Transverse colon (tissue), 4 donors: ENCODE measurements at regions of chr2 and their contacts with region 1.

Region 1: DNA sequence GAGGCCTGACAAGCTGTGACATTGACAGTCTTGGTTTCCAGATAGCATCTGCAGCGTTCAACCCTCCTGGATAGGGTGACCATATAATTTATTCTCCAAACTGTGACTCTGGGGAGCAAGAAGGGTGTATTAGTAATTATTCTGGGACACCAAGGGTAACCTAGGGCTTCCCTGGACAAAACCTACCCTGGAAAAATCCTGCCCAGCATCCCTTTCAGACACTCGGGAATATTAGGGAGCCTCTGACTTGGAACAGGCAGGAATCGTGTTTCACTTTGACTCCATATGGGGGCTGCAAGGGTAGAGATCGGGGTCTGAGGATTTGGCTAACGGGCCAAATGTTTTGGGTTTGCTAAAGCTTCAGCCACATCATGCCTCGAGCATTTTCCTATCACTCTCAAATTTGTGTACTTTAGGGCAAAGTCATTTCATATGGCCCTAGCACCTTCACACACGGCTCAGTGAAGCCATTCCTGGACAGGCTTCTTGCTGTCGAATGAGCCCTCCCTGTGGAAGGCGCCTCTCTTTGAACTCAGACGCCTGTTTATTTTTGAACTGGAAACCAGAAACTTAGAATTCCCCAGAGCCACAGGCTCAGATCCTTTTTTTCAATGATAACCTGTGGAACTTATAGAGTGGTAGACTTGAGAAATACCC is 129.9 kb downstream of the DDX1 start:
- DNase-seq: no peak
- H3K4me3 ChIP-seq: no peak overlapping the region
- H3K27ac ChIP-seq: no peak overlapping the region
- H3K4me1 ChIP-seq: no peaks in the 10 kb centered on the region
- H3K27me3 ChIP-seq: no peaks in the 10 kb centered on the region
- CTCF ChIP-seq: no peak
- EP300 ChIP-seq: no peak
- POLR2A ChIP-seq: no peak

Region 2: DNA sequence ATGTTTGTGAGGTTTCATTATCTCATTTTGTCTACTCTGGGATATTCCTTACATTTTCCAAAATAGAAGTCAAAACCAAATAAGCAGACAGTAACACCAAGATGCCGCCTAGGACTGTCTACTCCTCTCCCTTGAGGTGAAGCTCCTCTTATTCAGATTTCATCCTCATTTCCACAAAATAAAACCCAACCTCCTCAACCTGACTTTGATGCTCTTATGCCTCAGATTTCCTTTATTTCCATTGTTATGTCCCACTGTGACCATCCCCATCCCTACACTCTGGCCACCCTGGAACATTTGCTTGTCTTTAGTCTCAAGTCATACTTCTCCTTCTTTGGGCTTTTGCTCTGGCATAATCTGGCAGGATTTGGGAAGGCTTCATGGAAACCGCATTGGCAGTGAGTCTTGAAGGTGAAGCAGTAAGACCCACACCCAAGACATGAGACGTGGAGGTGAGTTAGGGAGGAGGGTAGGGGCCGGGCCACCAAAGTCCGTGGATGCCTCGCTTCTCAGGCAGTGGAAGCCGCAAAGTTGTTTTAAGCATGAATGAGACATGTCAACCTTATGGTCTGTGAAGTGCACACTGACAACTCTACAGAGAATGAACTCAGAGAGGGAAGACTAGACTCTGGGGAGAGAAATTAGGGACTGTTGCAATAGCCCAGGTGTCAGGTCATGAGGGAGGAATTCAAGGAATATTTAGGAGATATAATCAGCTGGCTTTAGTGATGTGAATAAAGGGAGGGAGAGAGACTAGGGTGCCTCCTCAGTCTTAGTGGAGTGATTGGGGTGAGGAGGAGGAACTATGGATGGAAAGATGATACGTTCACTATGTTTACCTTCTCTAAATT is 66.2 kb before region 1 on chr2:
- in situ Hi-C with region 1: no loop called
- intact Hi-C with region 1: no loop called
- DNase-seq: no peak
- H3K4me3 ChIP-seq: no peak overlapping the region
- H3K27ac ChIP-seq: no peak overlapping the region
- H3K4me1 ChIP-seq: no peaks in the 10 kb centered on the region
- H3K27me3 ChIP-seq: no peaks in the 10 kb centered on the region
- CTCF ChIP-seq: no peak
- EP300 ChIP-seq: no peak
- POLR2A ChIP-seq: no peak

Region 3: GRCh38 chr2:15681089-15681885 is 40.3 kb before region 1 on chr2:
- in situ Hi-C with region 1: no loop called
- intact Hi-C with region 1: loop called (anchors 1 kb)
- DNase-seq: no peak
- H3K4me3 ChIP-seq: no peak overlapping the region
- H3K27ac ChIP-seq: no peak overlapping the region
- H3K4me1 ChIP-seq: peaks cover 0 to 6% (median 3%) of the 10 kb centered on the region in 4 donors
- H3K27me3 ChIP-seq: no peaks in the 10 kb centered on the region
- CTCF ChIP-seq: no peak
- EP300 ChIP-seq: no peak
- POLR2A ChIP-seq: no peak

Region 4: DNA sequence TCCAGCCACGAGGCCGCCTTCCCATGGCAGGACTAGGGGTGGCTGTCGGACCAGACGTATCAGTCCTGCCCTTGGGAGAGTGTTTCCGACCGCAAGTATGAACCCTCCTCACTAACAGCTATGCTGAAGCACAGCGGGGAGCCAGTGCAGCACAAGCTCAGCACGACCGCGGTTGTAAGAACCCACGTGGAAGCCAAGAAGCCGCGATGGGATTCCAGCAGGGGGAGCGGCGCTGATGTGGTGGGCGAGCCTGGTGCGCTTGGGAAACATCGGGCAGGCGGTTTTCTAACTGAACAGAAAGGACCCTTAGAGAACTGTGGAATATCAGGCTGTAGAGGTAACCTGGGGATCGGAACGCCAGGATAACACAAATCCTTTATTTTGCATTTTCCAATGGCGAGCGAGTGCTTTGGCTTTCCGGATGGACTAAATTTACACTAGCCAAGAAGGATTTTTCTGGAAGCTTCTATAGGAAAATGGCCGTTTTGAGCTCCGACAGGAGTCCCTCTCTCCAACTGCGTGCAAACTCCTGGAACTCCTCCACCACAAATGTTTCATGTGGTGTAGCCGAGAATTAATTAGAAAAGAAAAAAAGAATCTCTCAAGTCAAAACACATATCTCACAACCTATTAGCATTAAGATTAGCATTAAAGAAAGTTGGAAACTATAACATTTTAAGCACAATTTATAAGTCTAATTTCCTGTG is 86.8 kb after region 1 on chr2:
- in situ Hi-C with region 1: no loop called
- intact Hi-C with region 1: no loop called
- DNase-seq: no peak
- H3K4me3 ChIP-seq: no peak overlapping the region
- H3K27ac ChIP-seq: no peak overlapping the region
- H3K4me1 ChIP-seq: no peaks in the 10 kb centered on the region
- H3K27me3 ChIP-seq: no peaks in the 10 kb centered on the region
- CTCF ChIP-seq: no peak
- EP300 ChIP-seq: no peak
- POLR2A ChIP-seq: no peak

Region 5: GRCh38 chr2:15955295-15956166 is 234.0 kb after region 1 on chr2:
- in situ Hi-C with region 1: no loop called
- intact Hi-C with region 1: no loop called
- DNase-seq: no peak
- H3K4me3 ChIP-seq: no peak overlapping the region
- H3K27ac ChIP-seq: no peak overlapping the region
- H3K4me1 ChIP-seq: no peaks in the 10 kb centered on the region
- H3K27me3 ChIP-seq: no peaks in the 10 kb centered on the region
- CTCF ChIP-seq: no peak
- EP300 ChIP-seq: no peak
- POLR2A ChIP-seq: no peak